CD8-positive, alpha-beta T cell (primary cell): ENCODE measurements at regions of chr5 and their contacts with region 1.

Region 1: GRCh38 chr5:43484106-43484849 is 613 bp upstream of the TMEM267 start:
- DNase-seq: peak; percentile 72 to 92 (median 86)
- ATAC-seq: peak; percentile 67
- H3K4me3 ChIP-seq: peak overlapping the region; percentile 76 to 97
- H3K4me3 Mint-ChIP-seq: peak overlapping the region; percentile 98
- H3K27ac ChIP-seq: peak overlapping the region; percentile 96 to 99
- H3K27ac Mint-ChIP-seq: peak overlapping the region; percentile 100
- H3K4me1 ChIP-seq: peaks cover 30% of the 10 kb centered on the region
- H3K4me1 Mint-ChIP-seq: peaks cover 53% of the 10 kb centered on the region
- H3K27me3 ChIP-seq: no peaks in the 10 kb centered on the region
- H3K27me3 Mint-ChIP-seq: no peaks in the 10 kb centered on the region
- CTCF ChIP-seq: peak; percentile 73

Region 2: GRCh38 chr5:41924872-41925554 is 1559.3 kb before region 1 on chr5 and contains the start of gene FBXO4:
- CTCF ChIA-PET with region 1: no interaction called
- POLR2A ChIA-PET with region 1: interaction called, 7 read pairs
- intact Hi-C with region 1: loop called (anchors 2 to 5 kb)
- DNase-seq: peak; percentile 79 to 96 (median 88)
- ATAC-seq: peak; percentile 96
- H3K4me3 ChIP-seq: peak within 1 kb of the TSS; percentile 79 to 87
- H3K4me3 Mint-ChIP-seq: peak within 1 kb of the TSS; percentile 87
- H3K27ac ChIP-seq: peak within 1 kb of the TSS; percentile 91 to 98
- H3K27ac Mint-ChIP-seq: peak within 1 kb of the TSS; percentile 99
- H3K4me1 ChIP-seq: peaks cover 16% of the 10 kb centered on the region
- H3K4me1 Mint-ChIP-seq: peaks cover 28% of the 10 kb centered on the region
- H3K27me3 ChIP-seq: no peaks in the 10 kb centered on the region
- H3K27me3 Mint-ChIP-seq: no peaks in the 10 kb centered on the region
- CTCF ChIP-seq: peak; percentile 57
- total RNA-seq, gene FBXO4: 4.4 to 4.7 TPM

Region 3: GRCh38 chr5:42242881-42243485 is 1241.3 kb before region 1 on chr5:
- CTCF ChIA-PET with region 1: no interaction called
- POLR2A ChIA-PET with region 1: no interaction called
- intact Hi-C with region 1: no loop called
- DNase-seq: no peak
- ATAC-seq: no peak
- H3K4me3 ChIP-seq: no peak overlapping the region
- H3K4me3 Mint-ChIP-seq: no peak overlapping the region
- H3K27ac ChIP-seq: no peak overlapping the region
- H3K27ac Mint-ChIP-seq: no peak overlapping the region
- H3K4me1 ChIP-seq: no peaks in the 10 kb centered on the region
- H3K4me1 Mint-ChIP-seq: no peaks in the 10 kb centered on the region
- H3K27me3 ChIP-seq: no peaks in the 10 kb centered on the region
- H3K27me3 Mint-ChIP-seq: no peaks in the 10 kb centered on the region
- CTCF ChIP-seq: no peak

Region 4: DNA sequence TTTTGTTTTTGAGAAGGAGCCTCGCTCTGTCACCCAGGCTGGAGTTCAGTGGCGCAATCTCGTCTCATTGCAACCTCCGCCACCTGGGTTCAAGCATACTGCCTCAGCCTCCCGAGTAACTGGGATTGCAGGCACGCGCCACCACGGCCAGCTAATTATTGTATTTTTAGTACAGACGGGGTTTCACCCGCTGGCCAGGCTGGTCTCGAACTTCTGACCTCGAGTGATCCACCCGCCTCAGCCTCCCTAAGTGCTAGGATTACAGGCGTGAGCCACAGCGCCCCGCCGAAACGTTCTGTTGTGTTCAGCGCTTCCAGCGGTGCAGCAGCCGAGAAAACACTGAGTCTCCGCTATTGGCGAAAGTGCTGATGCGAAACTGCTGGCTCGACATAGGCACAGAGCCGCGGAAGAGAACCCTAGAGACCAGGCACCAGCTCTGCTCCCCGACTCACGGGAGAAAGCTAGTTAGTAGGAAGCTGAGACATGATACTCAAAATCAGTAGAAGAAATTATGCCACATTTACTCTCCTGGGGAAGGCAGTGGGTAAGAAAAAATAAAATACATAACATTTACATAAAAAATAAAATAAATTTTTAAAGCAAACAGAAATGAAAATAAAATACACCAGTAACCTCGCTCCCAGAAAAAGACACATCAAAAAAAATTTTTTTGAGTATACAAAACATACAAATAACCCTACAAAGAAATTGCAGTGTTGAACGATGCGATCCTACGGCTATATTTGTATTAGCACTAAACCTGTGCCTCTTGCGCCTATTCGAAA is 475.7 kb before region 1 on chr5:
- CTCF ChIA-PET with region 1: no interaction called
- POLR2A ChIA-PET with region 1: interaction called, 32 read pairs
- intact Hi-C with region 1: no loop called
- DNase-seq: peak; percentile 86 to 97 (median 93)
- ATAC-seq: peak; percentile 63
- H3K4me3 ChIP-seq: peak overlapping the region; percentile 70 to 81
- H3K4me3 Mint-ChIP-seq: peak overlapping the region; percentile 98
- H3K27ac ChIP-seq: peak overlapping the region; percentile 94 to 96
- H3K27ac Mint-ChIP-seq: peak overlapping the region; percentile 96
- H3K4me1 ChIP-seq: peaks cover 25% of the 10 kb centered on the region
- H3K4me1 Mint-ChIP-seq: peaks cover 34% of the 10 kb centered on the region
- H3K27me3 ChIP-seq: no peaks in the 10 kb centered on the region
- H3K27me3 Mint-ChIP-seq: no peaks in the 10 kb centered on the region
- CTCF ChIP-seq: no peak

Region 5: GRCh38 chr5:43073597-43074546 is 410.4 kb before region 1 on chr5:
- CTCF ChIA-PET with region 1: no interaction called
- POLR2A ChIA-PET with region 1: interaction called, 43 read pairs
- intact Hi-C with region 1: loop called (anchors 1 to 5 kb)
- DNase-seq: peak in 7 of 9 experiments; percentile 22 to 77 (median 56)
- ATAC-seq: peak; percentile 92
- H3K4me3 ChIP-seq: no peak overlapping the region
- H3K4me3 Mint-ChIP-seq: no peak overlapping the region
- H3K27ac ChIP-seq: no peak overlapping the region
- H3K27ac Mint-ChIP-seq: no peak overlapping the region
- H3K4me1 ChIP-seq: peaks cover 16% of the 10 kb centered on the region
- H3K4me1 Mint-ChIP-seq: peaks cover 52% of the 10 kb centered on the region
- H3K27me3 ChIP-seq: no peaks in the 10 kb centered on the region
- H3K27me3 Mint-ChIP-seq: no peaks in the 10 kb centered on the region
- CTCF ChIP-seq: peak; percentile 68

Region 6: DNA sequence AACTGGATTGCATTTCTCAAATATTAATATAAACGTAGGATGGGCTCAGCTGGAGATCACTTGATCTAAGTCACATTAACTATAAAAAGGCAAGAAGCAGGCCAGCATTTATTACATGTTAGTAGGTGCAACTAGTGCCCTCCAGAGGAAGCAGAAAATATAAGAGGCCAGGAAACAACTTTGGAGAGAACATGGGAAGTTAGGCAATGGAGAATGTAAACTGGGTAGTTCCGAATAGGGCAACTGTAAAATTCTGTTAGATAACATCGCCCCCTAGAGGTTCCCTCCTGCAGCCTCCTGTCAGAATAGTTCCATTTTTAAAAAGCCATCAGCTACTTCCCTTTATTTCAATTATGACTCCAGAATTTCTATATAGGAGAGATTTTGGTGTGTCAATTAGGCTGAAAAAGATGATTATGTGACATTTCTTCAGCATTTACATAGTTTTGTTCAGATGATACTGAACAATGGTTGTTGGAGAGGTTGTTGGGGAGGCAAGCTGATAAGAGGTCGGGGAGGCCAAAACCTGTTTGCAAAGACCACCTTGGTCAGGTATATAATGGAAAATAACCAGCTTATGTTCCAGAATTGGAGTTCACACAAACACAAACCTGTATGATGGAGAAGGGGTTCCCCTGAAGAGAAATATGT is 94.5 kb before region 1 on chr5:
- CTCF ChIA-PET with region 1: interaction called, 22 read pairs
- POLR2A ChIA-PET with region 1: interaction called, 9 read pairs
- intact Hi-C with region 1: loop called (anchors 2 to 5 kb)
- DNase-seq: peak in 7 of 9 experiments; percentile 11 to 73 (median 43)
- ATAC-seq: peak; percentile 64
- H3K4me3 ChIP-seq: no peak overlapping the region
- H3K4me3 Mint-ChIP-seq: no peak overlapping the region
- H3K27ac ChIP-seq: no peak overlapping the region
- H3K27ac Mint-ChIP-seq: no peak overlapping the region
- H3K4me1 ChIP-seq: no peaks in the 10 kb centered on the region
- H3K4me1 Mint-ChIP-seq: peaks cover 35% of the 10 kb centered on the region
- H3K27me3 ChIP-seq: no peaks in the 10 kb centered on the region
- H3K27me3 Mint-ChIP-seq: no peaks in the 10 kb centered on the region
- CTCF ChIP-seq: peak; percentile 87

Region 7: GRCh38 chr5:43514816-43515677 is 30.8 kb after region 1 on chr5 and contains the start of gene C5orf34:
- CTCF ChIA-PET with region 1: interaction called, 5 read pairs
- POLR2A ChIA-PET with region 1: interaction called, 38 read pairs
- intact Hi-C with region 1: loop called (anchors 1 kb)
- DNase-seq: peak; percentile 84 to 97 (median 95)
- ATAC-seq: peak; percentile 86
- H3K4me3 ChIP-seq: peak within 1 kb of the TSS; percentile 68 to 77
- H3K4me3 Mint-ChIP-seq: peak within 1 kb of the TSS; percentile 97
- H3K27ac ChIP-seq: peak within 1 kb of the TSS; percentile 82
- H3K27ac Mint-ChIP-seq: peak within 1 kb of the TSS; percentile 95
- H3K4me1 ChIP-seq: peaks cover 15% of the 10 kb centered on the region
- H3K4me1 Mint-ChIP-seq: peaks cover 31% of the 10 kb centered on the region
- H3K27me3 ChIP-seq: no peaks in the 10 kb centered on the region
- H3K27me3 Mint-ChIP-seq: no peaks in the 10 kb centered on the region
- CTCF ChIP-seq: no peak
- total RNA-seq, gene C5orf34: 0.61 to 0.95 TPM

Region 8: GRCh38 chr5:44565872-44566271 is 1081.6 kb after region 1 on chr5:
- CTCF ChIA-PET with region 1: no interaction called
- POLR2A ChIA-PET with region 1: no interaction called
- intact Hi-C with region 1: no loop called
- DNase-seq: no peak
- ATAC-seq: no peak
- H3K4me3 ChIP-seq: no peak overlapping the region
- H3K4me3 Mint-ChIP-seq: no peak overlapping the region
- H3K27ac ChIP-seq: no peak overlapping the region
- H3K27ac Mint-ChIP-seq: no peak overlapping the region
- H3K4me1 ChIP-seq: no peaks in the 10 kb centered on the region
- H3K4me1 Mint-ChIP-seq: no peaks in the 10 kb centered on the region
- H3K27me3 ChIP-seq: no peaks in the 10 kb centered on the region
- H3K27me3 Mint-ChIP-seq: no peaks in the 10 kb centered on the region
- CTCF ChIP-seq: no peak

Region 9: DNA sequence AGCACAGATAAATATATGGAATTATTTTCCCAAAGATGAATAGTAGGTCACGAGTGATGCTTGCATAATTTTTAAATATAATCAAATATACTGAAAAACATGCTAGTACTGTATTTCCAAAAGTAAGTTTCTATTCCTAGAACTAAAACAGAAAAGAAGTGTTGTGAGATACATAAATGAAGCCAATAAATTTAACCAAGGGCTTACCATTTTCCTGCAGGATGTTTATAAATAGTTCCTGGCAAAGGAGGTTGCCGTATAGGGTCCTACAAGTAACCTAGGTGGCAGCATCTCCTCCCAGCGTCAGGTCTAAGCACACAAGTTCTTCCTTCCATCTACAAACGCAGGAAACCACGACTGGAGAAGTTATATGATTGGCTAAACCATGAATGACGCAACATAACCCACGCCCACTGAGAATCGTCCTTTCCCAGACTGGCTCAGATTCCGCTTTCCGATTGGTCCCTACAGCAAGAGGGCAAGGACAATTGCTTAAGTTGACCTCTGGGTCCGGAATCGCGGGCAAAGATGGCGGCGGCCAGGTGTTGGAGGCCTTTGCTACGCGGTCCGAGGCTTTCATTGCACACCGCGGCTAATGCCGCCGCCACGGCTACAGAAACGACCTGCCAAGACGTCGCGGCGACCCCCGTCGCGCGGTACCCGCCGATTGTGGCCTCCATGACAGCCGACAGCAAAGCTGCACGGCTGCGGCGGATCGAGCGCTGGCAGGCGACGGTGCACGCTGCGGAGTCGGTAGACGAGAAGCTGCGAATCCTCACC is 1324.3 kb after region 1 on chr5 and contains the start of gene MRPS30:
- CTCF ChIA-PET with region 1: no interaction called
- POLR2A ChIA-PET with region 1: no interaction called
- intact Hi-C with region 1: loop called (anchors 1 to 10 kb)
- DNase-seq: peak; percentile 78 to 98 (median 89)
- ATAC-seq: peak; percentile 93
- H3K4me3 ChIP-seq: peak within 1 kb of the TSS; percentile 88 to 94
- H3K4me3 Mint-ChIP-seq: peak within 1 kb of the TSS; percentile 91
- H3K27ac ChIP-seq: peak within 1 kb of the TSS; percentile 88 to 89
- H3K27ac Mint-ChIP-seq: peak within 1 kb of the TSS; percentile 94
- H3K4me1 ChIP-seq: peaks cover 22% of the 10 kb centered on the region
- H3K4me1 Mint-ChIP-seq: peaks cover 36% of the 10 kb centered on the region
- H3K27me3 ChIP-seq: peaks cover 0 to 3% of the 10 kb centered on the region in 2 experiments
- H3K27me3 Mint-ChIP-seq: peaks cover 6% of the 10 kb centered on the region
- CTCF ChIP-seq: peak; percentile 48
- total RNA-seq, gene MRPS30: 51.5 to 52.4 TPM